GM12878 (cell line): ENCODE measurements at regions of chr2 and their contacts with region 1.

Region 1: DNA sequence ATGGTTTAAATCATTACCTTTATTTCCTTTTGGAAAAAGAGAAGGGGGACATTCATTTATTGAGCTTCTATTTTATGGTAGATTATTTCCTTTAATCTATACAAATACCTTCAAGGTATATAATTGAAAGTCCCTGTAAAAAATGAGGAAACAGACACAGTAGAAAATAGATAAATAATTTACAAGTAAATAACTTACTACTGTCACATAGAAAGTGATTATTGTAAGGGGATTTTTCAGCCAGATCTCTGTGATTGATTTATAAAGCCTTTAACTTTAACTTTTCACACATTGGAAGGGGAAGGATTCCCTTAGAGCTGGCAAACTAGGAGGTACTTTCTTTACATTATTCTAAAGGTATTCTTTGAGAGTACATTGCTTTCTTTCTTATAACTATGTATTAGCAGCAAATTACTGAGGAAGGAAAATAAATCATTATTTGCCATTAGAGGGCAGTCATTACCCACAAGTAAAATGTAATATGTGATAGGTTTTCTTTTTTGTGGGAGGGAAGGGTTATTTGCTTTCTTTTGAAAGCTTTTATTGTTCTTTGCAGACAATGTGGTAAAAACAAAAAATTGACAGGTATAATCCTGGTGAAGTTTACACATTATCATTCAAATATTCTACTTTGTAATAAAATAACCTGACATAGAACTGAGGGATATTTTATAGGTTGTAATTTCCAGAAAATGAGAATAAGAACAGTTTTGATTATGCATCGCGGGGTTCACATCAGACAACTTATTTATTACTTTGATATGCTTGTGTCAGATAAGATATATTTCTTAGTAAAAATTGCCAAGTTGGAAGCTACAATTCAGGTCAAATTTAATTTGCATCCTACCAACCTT is 24.8 kb upstream of the RPE start:
- DNase-seq: peak; percentile 21
- ATAC-seq: peak; percentile 76
- H3K4me3 ChIP-seq: no peak overlapping the region
- H3K27ac ChIP-seq: no peak overlapping the region
- H3K4me1 ChIP-seq: no peaks in the 10 kb centered on the region
- H3K27me3 ChIP-seq: no peaks in the 10 kb centered on the region
- CTCF ChIP-seq: peak in 2 of 3 experiments; percentile 32 to 61; a peak in 2 of 6 replicates
- EP300 ChIP-seq: no peak
- POLR2A ChIP-seq: no peak
- RAD21 ChIP-seq: peak; percentile 77

Region 2: DNA sequence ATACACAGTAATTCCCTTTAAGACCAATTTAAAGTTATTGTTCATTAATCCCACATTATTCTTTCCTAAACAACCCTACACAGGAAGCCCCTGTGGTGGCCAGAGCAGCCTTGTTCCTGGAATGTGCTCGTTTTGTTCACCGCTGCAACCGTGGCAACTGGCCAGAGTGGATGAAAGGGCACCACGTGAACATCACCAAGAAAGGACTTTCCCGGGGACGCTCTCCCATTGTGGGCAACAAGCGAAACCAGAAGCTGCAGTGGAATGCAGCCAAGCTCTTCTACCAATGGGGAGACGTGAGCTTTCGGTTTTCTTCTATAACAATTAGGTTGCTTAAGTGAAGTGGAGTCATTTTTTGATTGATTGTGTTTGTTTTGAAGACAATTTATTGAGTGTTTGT is 104.9 kb before region 1 on chr2:
- CTCF ChIA-PET with region 1: no interaction called
- POLR2A ChIA-PET with region 1: no interaction called
- RAD21 ChIA-PET with region 1: no interaction called
- SMC1A ChIA-PET with region 1: no interaction called
- in situ Hi-C with region 1: no loop called
- intact Hi-C with region 1: no loop called
- DNase-seq: peak; percentile 0
- ATAC-seq: peak; percentile 70
- H3K4me3 ChIP-seq: no peak overlapping the region
- H3K27ac ChIP-seq: no peak overlapping the region
- H3K4me1 ChIP-seq: no peaks in the 10 kb centered on the region
- H3K27me3 ChIP-seq: no peaks in the 10 kb centered on the region
- CTCF ChIP-seq: no peak
- EP300 ChIP-seq: no peak
- POLR2A ChIP-seq: no peak
- RAD21 ChIP-seq: no peak

Region 3: DNA sequence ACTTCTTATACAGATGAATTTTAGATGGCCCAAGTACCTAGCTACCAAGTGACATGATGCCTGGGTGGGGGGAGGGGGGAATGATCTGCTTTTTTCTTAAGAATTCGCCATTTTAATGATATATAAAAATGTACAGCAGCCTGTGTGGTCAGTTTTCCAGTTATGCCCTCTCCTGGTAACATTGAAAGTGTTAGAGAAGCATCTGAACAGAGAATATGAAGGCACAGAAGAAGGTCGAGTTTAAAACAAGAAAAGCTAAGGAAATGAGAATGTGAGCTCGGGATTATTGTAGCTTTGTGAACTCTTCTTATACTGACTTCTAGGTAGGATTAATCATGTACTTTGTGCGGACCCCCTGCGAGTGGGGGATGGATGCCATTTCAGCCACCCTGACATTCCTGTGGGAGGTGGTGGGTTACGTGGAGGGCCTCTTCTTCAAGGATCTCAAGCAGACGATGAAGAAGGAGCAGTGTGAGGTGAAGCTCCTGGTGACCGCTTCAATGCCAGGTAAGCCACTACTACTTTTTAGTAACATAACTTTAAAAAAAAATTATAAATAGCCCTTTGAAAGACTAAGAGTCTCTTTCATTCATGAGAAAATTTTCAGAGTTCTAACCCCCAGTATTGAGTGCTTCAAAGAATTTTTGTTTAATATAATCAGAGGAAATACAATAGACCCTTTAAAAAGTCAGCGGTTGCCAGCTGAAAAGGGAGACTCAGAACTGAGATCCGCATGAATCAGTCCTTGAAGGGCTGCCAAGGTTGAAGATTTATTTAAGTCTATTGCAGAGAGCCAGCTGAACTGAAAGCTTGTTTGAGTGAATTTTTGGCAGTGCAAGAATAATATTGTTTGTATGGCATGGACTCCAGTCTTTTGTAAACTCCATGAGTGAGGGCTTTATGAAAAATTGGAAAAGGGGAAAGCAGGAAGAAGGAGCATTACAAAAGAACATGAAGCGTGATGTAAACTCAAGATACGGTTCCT is 43.8 kb before region 1 on chr2:
- CTCF ChIA-PET with region 1: no interaction called
- POLR2A ChIA-PET with region 1: no interaction called
- RAD21 ChIA-PET with region 1: no interaction called
- SMC1A ChIA-PET with region 1: no interaction called
- in situ Hi-C with region 1: no loop called
- intact Hi-C with region 1: no loop called
- DNase-seq: no peak
- ATAC-seq: no peak
- H3K4me3 ChIP-seq: no peak overlapping the region
- H3K27ac ChIP-seq: no peak overlapping the region
- H3K4me1 ChIP-seq: no peaks in the 10 kb centered on the region
- H3K27me3 ChIP-seq: no peaks in the 10 kb centered on the region
- CTCF ChIP-seq: no peak
- EP300 ChIP-seq: no peak
- POLR2A ChIP-seq: no peak
- RAD21 ChIP-seq: no peak

Region 4: DNA sequence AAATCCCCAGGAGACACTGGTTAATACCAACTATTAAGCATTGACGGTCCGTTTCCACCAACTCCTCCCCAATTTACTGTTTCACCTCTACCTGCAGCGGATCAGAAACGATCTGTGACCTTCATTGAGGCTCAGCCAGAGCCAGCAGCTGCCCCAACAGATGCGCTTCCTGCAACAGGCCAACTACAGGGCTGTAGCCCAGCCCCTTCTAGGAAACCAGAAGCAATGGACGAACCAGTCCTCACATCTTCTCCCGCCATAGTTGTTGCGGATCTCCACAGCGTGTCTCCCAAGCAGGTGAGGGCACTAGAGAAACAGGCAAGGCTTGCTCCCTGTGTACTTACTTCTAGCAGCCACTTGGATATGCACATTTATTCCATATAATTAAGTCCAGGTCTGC is 16.4 kb after region 1 on chr2:
- CTCF ChIA-PET with region 1: interaction called, 10 read pairs
- POLR2A ChIA-PET with region 1: interaction called, 4 read pairs
- RAD21 ChIA-PET with region 1: interaction called, 3 read pairs
- SMC1A ChIA-PET with region 1: interaction called, 3 read pairs
- in situ Hi-C with region 1: no loop called
- intact Hi-C with region 1: no loop called
- DNase-seq: no peak
- ATAC-seq: no peak
- H3K4me3 ChIP-seq: no peak overlapping the region
- H3K27ac ChIP-seq: no peak overlapping the region
- H3K4me1 ChIP-seq: no peaks in the 10 kb centered on the region
- H3K27me3 ChIP-seq: peaks cover 0 to 2% of the 10 kb centered on the region in 2 experiments; a peak in 1 of 4 replicates
- CTCF ChIP-seq: no peak
- EP300 ChIP-seq: no peak
- POLR2A ChIP-seq: no peak
- RAD21 ChIP-seq: no peak

Region 5: GRCh38 chr2:210203157-210203947 is 225.7 kb after region 1 on chr2:
- CTCF ChIA-PET with region 1: interaction called, 40 read pairs
- POLR2A ChIA-PET with region 1: no interaction called
- RAD21 ChIA-PET with region 1: interaction called, 34 read pairs
- SMC1A ChIA-PET with region 1: interaction called, 38 read pairs
- in situ Hi-C with region 1: loop called (anchors 5 kb)
- intact Hi-C with region 1: loop called (anchors 1 kb)
- DNase-seq: no peak
- ATAC-seq: no peak
- H3K4me3 ChIP-seq: no peak overlapping the region
- H3K27ac ChIP-seq: no peak overlapping the region
- H3K4me1 ChIP-seq: no peaks in the 10 kb centered on the region
- H3K27me3 ChIP-seq: no peaks in the 10 kb centered on the region; a peak in 1 of 4 replicates
- CTCF ChIP-seq: no peak
- EP300 ChIP-seq: no peak
- POLR2A ChIP-seq: no peak
- RAD21 ChIP-seq: no peak